ENCODE measurements at regions of chr14 and their contacts with region 1.

Region 1: GRCh38 chr14:89137514-89138163 is 279.4 kb downstream of the FOXN3 start:
- DNase-seq: peak; percentile 94
- H3K4me3 ChIP-seq: no peak overlapping the region
- H3K27ac ChIP-seq: no peak overlapping the region
- H3K4me1 ChIP-seq: peaks cover 25% of the 10 kb centered on the region
- H3K27me3 ChIP-seq: no peaks in the 10 kb centered on the region
- CTCF ChIP-seq: no peak

Region 2: DNA sequence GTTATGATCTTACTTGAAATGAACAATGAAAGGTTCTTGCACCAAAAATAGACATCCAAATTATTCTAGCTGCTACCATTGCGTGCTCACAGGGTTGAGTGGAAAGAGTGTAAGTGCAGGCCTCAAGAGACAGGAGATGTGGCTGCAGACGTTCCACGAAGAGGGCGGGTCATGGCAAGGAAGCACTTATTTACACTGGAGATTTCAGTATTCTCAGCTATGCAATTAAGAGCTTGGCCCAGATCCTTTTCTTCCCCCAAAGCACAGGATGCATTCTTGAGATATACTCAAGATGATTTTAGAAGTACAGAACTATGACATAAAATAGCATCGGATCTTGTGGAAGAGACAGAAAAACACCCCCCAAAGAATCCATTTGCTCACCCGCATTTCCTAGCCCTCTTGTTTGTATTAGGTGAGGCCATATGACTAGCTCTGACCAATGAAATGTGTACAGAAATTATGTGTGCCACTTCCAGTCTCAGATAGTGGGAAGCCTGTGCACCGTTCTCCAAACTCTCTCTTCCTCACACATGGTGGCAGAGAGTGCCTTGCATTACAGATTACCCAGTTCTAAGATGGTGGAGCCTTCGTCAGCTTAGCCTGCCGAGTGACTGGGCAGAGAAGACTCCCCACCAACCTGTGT is 51.8 kb before region 1 on chr14:
- CTCF ChIA-PET with region 1: no interaction called
- dilution Hi-C with region 1: no loop called
- in situ Hi-C with region 1: no loop called
- intact Hi-C with region 1: no loop called
- DNase-seq: no peak
- H3K4me3 ChIP-seq: no peak overlapping the region
- H3K27ac ChIP-seq: no peak overlapping the region
- H3K4me1 ChIP-seq: no peaks in the 10 kb centered on the region
- H3K27me3 ChIP-seq: no peaks in the 10 kb centered on the region
- CTCF ChIP-seq: no peak

Region 3: DNA sequence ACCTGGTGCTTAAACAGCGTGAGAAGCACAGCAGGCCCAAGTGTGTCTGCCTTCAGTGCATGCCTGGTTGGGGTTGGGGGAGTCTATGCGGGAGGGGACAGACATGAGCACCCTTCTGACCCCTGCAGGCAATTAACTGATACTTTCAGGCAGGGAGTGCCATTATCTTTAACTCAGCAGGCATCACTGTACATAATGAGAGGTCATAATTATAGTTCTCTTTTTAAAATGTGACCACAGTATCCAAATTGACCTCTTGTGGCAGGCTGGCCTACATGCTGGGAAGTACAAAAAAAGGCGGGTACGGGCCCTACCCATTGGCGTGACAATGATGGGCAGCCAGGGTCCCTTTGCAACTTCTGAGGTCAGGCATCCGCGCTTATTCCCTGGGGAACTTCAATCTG is 70.3 kb after region 1 on chr14:
- CTCF ChIA-PET with region 1: no interaction called
- dilution Hi-C with region 1: loop called (anchors 10 kb)
- in situ Hi-C with region 1: no loop called
- intact Hi-C with region 1: no loop called
- DNase-seq: no peak
- H3K4me3 ChIP-seq: no peak overlapping the region
- H3K27ac ChIP-seq: no peak overlapping the region
- H3K4me1 ChIP-seq: no peaks in the 10 kb centered on the region
- H3K27me3 ChIP-seq: no peaks in the 10 kb centered on the region
- CTCF ChIP-seq: no peak

Region 4: DNA sequence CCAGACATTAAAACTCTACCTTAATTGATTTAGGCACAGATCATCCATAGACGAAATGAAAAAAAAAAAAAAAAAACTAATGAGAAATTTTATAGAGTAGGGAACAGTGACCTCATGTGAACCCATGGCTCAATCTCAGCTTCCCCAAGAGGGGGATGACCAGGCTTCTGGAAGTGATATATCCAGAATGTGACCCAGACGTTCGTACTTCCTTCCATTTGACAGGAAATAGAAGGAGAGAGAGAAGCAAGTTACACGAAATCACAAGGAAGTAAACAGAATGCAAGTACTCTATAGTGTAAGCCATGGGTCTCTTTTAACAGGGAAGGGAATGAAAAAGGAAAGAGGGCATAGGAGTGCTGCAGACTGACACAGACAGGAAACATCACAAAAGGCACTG is 269.3 kb after region 1 on chr14:
- CTCF ChIA-PET with region 1: no interaction called
- dilution Hi-C with region 1: no loop called
- in situ Hi-C with region 1: no loop called
- intact Hi-C with region 1: no loop called
- DNase-seq: no peak
- H3K4me3 ChIP-seq: no peak overlapping the region
- H3K27ac ChIP-seq: no peak overlapping the region
- H3K4me1 ChIP-seq: peaks cover 28% of the 10 kb centered on the region
- H3K27me3 ChIP-seq: no peaks in the 10 kb centered on the region
- CTCF ChIP-seq: no peak

Measured in mammary epithelial cell (primary cell).